Activated naive CD4-positive, alpha-beta T cell treated with anti-CD3 and anti-CD28 coated beads, Interleukin-2, amount 10 ng/mL, durations not matched to agents 7 days and 5 days (primary cell): ENCODE measurements at regions of chr5 and their contacts with region 1.

Region 1: DNA sequence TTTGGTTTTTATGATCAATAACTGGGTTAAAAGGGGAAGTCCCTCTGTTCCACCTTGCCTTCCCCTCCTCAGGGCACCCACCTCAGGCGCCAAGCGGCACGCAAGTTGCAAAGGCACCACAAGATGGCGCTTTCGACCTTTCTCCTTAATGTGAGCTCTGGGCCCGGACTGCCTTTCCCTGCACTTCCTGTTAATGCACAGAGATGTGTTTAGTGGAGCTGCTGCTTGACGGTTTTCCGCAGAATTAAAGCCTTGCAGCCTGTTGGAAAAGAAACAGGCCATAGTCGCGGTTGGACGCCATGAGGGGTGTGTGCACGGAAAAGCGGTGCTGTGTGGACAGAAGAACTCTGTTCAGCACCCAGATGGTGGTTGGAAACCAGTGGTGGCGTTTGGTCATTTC is 17.9 kb downstream of the CXCL14 start:
- DNase-seq: peak; percentile 78
- H3K4me3 Mint-ChIP-seq: no peak overlapping the region
- H3K27ac Mint-ChIP-seq: no peak overlapping the region
- H3K4me1 Mint-ChIP-seq: peaks cover 4% of the 10 kb centered on the region
- H3K27me3 Mint-ChIP-seq: peaks cover 41% of the 10 kb centered on the region

Region 2: GRCh38 chr5:135457424-135458071 is 103.3 kb before region 1 on chr5:
- CTCF ChIA-PET with region 1: interaction called, 415 read pairs
- DNase-seq: peak; percentile 75
- H3K4me3 Mint-ChIP-seq: no peak overlapping the region
- H3K27ac Mint-ChIP-seq: no peak overlapping the region
- H3K4me1 Mint-ChIP-seq: peaks cover 5% of the 10 kb centered on the region
- H3K27me3 Mint-ChIP-seq: peaks cover 60% of the 10 kb centered on the region

Region 3: DNA sequence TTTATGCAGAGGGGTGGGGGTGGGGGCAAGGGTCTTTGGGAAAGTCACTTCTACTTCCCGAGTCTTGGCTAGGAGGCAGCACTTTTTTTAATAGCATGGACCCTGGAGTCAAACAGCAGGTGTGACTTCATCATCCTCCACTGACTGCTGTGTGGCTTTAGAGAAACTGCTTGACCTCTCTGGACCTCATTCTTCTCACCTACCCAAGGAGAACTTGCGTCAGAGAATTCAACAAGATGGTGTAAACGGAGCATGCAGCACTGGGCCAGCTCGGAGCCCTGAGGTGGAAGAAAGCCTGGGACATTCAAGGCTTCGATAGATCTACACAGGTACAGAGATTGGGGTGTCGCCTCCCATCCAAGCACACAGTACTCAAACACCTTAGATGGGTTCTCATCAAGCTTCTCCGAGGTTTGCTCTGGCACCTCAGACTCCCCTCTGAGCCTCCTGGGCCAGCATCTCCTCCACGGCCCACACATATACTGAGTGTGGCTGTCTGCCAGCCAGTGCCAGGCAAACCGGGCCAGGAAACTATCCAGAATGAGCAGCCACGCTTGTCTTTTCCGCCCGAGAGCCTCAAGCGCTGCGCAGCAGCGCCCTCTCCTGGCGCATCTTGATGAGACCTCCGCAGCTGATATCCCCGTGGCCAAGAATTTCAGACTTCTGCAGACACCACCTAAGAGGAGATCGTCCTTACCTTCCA is 269.0 kb after region 1 on chr5:
- CTCF ChIA-PET with region 1: interaction called, 61 read pairs
- DNase-seq: peak; percentile 63
- H3K4me3 Mint-ChIP-seq: no peak overlapping the region
- H3K27ac Mint-ChIP-seq: no peak overlapping the region
- H3K4me1 Mint-ChIP-seq: no peaks in the 10 kb centered on the region
- H3K27me3 Mint-ChIP-seq: peaks cover 50% of the 10 kb centered on the region